Dorsolateral prefrontal cortex (tissue), 120 donors: ENCODE measurements at regions of chr2 and their contacts with region 1.

Region 1: GRCh38 chr2:231900486-231900942 is 25.7 kb downstream of the NPPC start:
- DNase-seq: peak in 8 of 10 donors; percentile 14 to 71 (median 54)
- H3K4me3 ChIP-seq: no peak overlapping the region
- H3K27ac ChIP-seq: no peak overlapping the region
- H3K27me3 ChIP-seq: no peaks in the 10 kb centered on the region
- CTCF ChIP-seq: peak in 55 of 56 donors; percentile 30 to 74 (median 65)

Region 2: GRCh38 chr2:232008907-232009638 is 108.6 kb after region 1 on chr2:
- intact Hi-C with region 1: no loop called
- DNase-seq: no peak
- H3K4me3 ChIP-seq: no peak overlapping the region
- H3K27ac ChIP-seq: no peak overlapping the region
- H3K27me3 ChIP-seq: no peaks in the 10 kb centered on the region
- CTCF ChIP-seq: no peak

Region 3: DNA sequence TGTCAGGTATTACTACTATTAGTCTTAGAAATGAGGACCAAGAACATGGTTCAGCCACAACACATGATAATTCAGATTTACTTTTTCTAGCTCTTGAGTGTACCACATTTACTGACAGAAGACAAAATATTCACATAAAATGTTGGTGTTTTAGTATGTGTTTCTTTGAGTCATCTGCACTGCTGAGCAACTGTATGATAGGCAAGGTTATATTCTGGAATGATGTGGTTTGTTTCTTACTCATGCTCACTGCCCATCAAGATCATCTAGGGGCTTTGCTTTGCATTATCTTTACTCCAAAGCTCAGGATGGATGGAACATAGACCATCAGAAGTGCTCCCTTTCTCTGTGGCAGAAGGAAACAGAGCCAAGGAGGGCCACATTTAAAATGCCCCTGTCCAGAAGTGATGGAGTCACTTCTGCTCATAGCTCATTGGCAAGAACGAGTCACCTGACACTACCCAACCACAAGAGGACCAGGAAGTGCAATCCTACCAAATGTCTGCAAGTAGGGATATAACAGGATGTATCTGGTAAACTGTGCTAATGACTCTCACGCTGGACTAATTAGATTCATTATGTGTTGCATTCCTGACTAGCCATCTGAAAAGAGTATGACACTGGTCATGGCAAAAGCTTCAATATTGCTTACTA is 142.5 kb after region 1 on chr2:
- intact Hi-C with region 1: no loop called
- DNase-seq: no peak
- H3K4me3 ChIP-seq: no peak overlapping the region
- H3K27ac ChIP-seq: no peak overlapping the region
- H3K27me3 ChIP-seq: no peaks in the 10 kb centered on the region
- CTCF ChIP-seq: no peak

Region 4: DNA sequence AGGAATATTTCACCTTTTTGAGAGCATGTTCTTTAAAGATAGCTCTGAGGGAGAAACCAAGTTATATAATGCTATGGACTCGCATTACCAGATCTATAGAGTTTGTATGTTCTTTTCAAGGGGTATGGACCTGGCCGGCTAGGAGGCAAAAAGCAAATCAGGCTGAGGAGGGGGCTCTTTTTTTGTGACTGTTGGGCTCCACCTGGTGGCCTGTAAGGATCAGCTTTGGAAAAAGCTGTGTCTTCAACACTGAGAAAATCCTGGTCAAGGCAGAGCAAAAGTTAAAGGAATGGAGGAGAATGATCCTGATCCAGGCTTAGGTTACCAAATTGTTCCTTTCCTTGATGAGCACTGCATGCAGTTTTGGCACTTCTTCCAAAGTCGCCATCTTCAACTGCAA is 241.5 kb after region 1 on chr2:
- intact Hi-C with region 1: loop called in 1 of 2 experiments (anchors 5 kb)
- DNase-seq: peak in 5 of 10 donors; percentile 14 to 59 (median 39)
- H3K4me3 ChIP-seq: no peak overlapping the region
- H3K27ac ChIP-seq: no peak overlapping the region
- H3K27me3 ChIP-seq: no peaks in the 10 kb centered on the region
- CTCF ChIP-seq: peak in 55 of 56 donors; percentile 53 to 92 (median 74)

Region 5: GRCh38 chr2:232327105-232328041 is 426.9 kb after region 1 on chr2:
- intact Hi-C with region 1: loop called (anchors 5 kb)
- DNase-seq: peak; percentile 30 to 86 (median 78)
- H3K4me3 ChIP-seq: no peak overlapping the region
- H3K27ac ChIP-seq: no peak overlapping the region
- H3K27me3 ChIP-seq: no peaks in the 10 kb centered on the region
- CTCF ChIP-seq: peak; percentile 47 to 95 (median 85)

Region 6: GRCh38 chr2:232438951-232439757 is 538.6 kb after region 1 on chr2:
- intact Hi-C with region 1: loop called (anchors 5 kb)
- DNase-seq: peak in 2 of 10 donors; percentile 23 to 65
- H3K4me3 ChIP-seq: no peak overlapping the region
- H3K27ac ChIP-seq: no peak overlapping the region
- H3K27me3 ChIP-seq: peaks cover 0 to 4% (median 0%) of the 10 kb centered on the region in 45 donors
- CTCF ChIP-seq: peak in 54 of 56 donors; percentile 18 to 77 (median 63)

Region 7: DNA sequence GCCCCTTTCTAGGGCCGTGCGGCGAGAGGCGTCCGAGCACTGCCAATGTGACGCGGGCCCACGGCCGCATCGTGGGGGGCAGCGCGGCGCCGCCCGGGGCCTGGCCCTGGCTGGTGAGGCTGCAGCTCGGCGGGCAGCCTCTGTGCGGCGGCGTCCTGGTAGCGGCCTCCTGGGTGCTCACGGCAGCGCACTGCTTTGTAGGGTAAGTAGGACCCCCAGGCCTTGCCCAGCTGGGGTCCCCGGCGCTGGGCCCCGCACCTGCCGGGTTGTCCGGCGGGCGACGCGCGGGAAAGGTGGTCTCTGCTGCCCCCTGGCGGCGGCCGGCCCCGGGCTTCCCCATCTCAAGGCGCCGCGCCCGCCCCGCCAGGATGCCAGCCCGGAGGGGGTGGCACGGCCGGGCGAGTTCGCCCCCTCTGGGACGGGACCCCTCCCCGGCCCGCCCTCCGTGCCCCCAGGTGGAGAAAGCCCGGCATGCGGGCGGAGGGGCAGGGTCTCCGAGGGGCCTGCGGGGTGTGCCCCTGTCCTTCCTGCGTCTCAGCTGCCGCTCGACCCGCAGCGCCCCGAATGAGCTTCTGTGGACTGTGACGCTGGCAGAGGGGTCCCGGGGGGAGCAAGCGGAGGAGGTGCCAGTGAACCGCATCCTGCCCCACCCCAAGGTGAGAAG is 621.6 kb after region 1 on chr2:
- intact Hi-C with region 1: loop called (anchors 5 kb)
- DNase-seq: peak in 7 of 10 donors; percentile 32 to 77 (median 59)
- H3K4me3 ChIP-seq: peak overlapping the region; percentile 5 to 66 (median 47)
- H3K27ac ChIP-seq: peak overlapping the region in 1 of 59 donors; percentile 48
- H3K27me3 ChIP-seq: peaks cover 0 to 57% (median 29%) of the 10 kb centered on the region in 45 donors
- CTCF ChIP-seq: peak; percentile 72 to 99 (median 94)